Activated T-helper 2 cell treated with anti-CD3 and anti-CD28 coated beads, Interferon-gamma antibody, Interleukin-2, Interleukin-4, amounts not matched to agents 10 μg/mL and 5 μg/mL and 100 μg/mL, durations not matched to agents 14 hours and 24 hours and 36 hours (primary cell): ENCODE measurements at regions of chr14 and their contacts with region 1.

Region 1: DNA sequence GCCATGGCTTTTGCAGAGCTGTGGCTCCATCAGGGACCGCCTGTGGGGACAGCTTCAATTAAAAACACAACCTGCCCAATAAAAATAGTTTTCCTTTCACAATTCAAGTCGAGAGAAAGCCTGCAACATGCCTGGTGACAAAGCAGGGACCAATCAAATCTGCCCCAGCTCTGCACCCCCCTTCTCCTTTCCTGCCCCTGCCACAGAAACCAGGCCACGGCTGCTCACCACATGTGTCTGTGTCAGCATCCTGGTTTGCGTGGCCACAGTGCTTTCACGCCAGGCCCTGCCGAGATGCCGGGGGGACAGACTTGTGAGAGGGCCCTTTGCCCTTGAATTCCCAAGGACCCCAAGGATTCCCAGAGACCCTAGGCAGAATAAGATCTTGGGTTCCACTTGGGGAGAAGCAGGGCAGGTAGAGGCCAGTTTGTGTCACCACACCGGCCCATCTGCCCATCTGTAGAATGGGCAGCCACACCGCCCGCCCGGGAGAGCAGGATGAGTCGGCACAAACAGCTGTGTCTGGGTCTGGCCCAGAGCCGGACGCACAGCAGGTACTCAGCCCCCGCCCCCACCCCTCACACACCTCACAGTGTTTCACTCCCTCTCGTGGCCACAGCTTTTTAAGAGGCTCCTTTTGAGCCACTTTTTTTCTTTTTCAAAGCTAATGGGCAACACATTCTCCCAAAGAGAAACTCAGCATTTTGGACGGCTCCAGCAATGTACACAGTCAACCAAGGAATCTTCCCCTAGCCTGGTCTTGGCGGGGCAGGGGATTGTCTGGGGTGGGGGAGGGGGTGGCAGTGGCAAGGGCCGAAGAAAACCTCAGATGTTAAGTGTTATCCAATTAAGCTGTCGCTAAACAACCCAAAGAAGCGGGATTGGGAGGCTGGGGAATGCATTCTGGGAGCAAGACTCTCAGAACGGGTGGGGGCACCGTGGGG is 41.5 kb downstream of the BCL11B start:
- DNase-seq: peak; percentile 82
- H3K4me3 Mint-ChIP-seq: peak overlapping the region; percentile 62
- H3K27ac Mint-ChIP-seq: peak overlapping the region; percentile 93
- H3K4me1 Mint-ChIP-seq: peaks cover 85% of the 10 kb centered on the region
- H3K27me3 Mint-ChIP-seq: no peaks in the 10 kb centered on the region

Region 2: DNA sequence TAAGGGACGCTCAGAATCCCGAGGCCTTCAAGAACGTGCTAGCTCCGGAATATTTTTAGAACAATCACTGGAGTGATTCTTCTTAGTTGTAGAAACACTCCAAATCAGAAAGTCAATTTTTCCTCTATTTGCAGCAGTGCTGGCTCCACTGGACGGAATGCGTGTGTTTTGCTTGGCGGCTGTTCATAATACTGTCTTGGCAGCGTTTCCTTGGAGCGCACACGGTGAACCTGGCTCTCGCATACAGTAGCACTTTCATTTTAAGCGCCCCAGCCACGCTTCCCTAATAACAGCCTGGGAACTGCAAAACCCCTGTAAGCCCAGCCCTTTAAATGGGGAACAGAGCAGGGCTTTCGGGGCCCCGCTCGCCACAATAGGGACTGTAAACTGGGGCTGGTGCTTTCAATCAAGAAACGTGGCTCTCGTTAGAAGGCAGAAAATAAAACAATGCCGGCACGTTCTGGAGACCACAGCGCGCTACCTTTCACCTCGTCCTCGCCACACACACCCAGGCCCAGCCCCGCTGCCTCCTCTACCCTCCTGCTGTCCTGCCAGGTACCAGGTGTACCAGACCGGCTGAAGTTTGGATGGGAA is 38.4 kb before region 1 on chr14:
- intact Hi-C with region 1: loop called (anchors 2 kb)
- DNase-seq: peak; percentile 33
- H3K4me3 Mint-ChIP-seq: peak overlapping the region; percentile 91
- H3K27ac Mint-ChIP-seq: peak overlapping the region; percentile 96
- H3K4me1 Mint-ChIP-seq: peaks cover 76% of the 10 kb centered on the region
- H3K27me3 Mint-ChIP-seq: no peaks in the 10 kb centered on the region

Region 3: DNA sequence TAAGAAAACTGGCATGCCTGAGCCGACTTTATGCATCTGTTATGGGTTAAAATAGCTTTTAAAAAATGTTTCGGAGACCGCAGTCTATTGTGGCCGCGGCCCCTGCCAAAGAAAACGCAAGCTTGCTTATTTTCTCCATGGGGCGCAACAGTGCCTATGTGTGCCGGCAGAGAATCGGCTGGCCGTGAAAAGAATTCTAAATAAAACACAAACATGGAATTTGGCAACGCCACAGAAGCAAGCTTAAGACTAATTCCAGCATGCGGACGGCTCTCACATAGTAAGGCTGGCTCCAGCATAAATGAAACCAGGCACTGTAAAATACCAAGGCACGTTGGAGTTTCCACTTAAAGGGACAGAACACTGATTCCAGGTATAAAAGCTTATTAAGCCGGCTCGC is 15.2 kb before region 1 on chr14:
- intact Hi-C with region 1: loop called (anchors 2 kb)
- DNase-seq: no peak
- H3K4me3 Mint-ChIP-seq: peak overlapping the region; percentile 80
- H3K27ac Mint-ChIP-seq: peak overlapping the region; percentile 69
- H3K4me1 Mint-ChIP-seq: peaks cover 83% of the 10 kb centered on the region
- H3K27me3 Mint-ChIP-seq: no peaks in the 10 kb centered on the region

Region 4: DNA sequence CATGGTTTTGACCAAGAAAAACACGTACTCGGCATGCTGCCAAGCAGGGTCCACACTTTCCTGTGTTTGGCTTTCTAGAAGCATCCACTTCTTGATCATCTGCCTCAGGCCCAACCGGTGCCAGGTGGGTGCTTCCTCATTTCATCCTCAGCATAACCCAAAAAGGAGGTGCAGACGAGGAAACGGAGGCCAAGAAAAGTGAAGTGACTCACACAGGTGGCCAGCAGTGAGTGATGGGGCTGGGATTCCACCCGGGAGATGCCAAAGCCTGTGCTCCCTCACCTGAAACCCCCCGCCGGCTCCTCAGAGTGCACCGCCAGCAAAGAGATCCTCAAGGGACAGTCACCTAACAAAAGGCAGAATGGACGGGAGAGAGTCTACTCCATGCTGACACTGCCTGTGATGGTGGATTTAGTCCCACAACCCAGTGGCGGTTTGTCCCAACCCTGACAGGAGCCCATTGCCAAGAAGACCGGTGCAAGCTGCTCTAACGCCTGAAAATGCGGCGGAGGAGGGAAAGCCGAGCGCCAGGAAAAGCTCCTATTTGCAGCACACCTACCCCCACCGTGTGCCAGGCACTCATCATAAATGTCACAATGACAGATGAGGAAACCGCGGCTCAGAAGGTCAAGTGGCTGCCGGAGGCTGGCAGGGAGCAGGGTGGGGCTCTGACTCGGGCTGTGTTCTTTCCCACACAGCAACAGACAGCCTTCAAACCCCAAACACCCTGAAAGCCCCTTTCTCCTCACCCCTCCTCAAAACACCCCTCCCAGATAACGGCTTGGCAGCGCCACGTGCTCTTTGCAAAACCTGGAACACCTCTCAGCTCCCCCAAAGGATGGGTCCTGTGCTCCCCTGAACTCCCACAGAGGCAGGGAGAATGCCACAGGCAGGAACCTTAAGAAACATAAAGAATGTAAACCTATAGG is 22.7 kb after region 1 on chr14:
- intact Hi-C with region 1: loop called (anchors 2 kb)
- DNase-seq: no peak
- H3K4me3 Mint-ChIP-seq: peak overlapping the region; percentile 60
- H3K27ac Mint-ChIP-seq: peak overlapping the region; percentile 88
- H3K4me1 Mint-ChIP-seq: peaks cover 88% of the 10 kb centered on the region
- H3K27me3 Mint-ChIP-seq: no peaks in the 10 kb centered on the region

Region 5: GRCh38 chr14:99511421-99512109 is 281.1 kb after region 1 on chr14:
- intact Hi-C with region 1: no loop called
- DNase-seq: no peak
- H3K4me3 Mint-ChIP-seq: no peak overlapping the region
- H3K27ac Mint-ChIP-seq: no peak overlapping the region
- H3K4me1 Mint-ChIP-seq: no peaks in the 10 kb centered on the region
- H3K27me3 Mint-ChIP-seq: no peaks in the 10 kb centered on the region